Activated CD4-positive, alpha-beta memory T cell treated with anti-CD3 and anti-CD28 coated beads for 36 hours (primary cell): ENCODE measurements at regions of chr1 and their contacts with region 1.

Region 1: GRCh38 chr1:214261206-214262123 is 19.5 kb upstream of the SMYD2 start:
- DNase-seq: peak; percentile 87
- H3K4me3 Mint-ChIP-seq: no peak overlapping the region
- H3K27ac Mint-ChIP-seq: no peak overlapping the region
- H3K4me1 Mint-ChIP-seq: peaks cover 13% of the 10 kb centered on the region
- H3K27me3 Mint-ChIP-seq: peaks cover 52% of the 10 kb centered on the region

Region 2: GRCh38 chr1:213744780-213745179 is 516.7 kb before region 1 on chr1:
- CTCF ChIA-PET with region 1: no interaction called
- POLR2A ChIA-PET with region 1: no interaction called
- intact Hi-C with region 1: no loop called
- DNase-seq: no peak
- H3K4me3 Mint-ChIP-seq: no peak overlapping the region
- H3K27ac Mint-ChIP-seq: no peak overlapping the region
- H3K4me1 Mint-ChIP-seq: no peaks in the 10 kb centered on the region
- H3K27me3 Mint-ChIP-seq: no peaks in the 10 kb centered on the region

Region 3: GRCh38 chr1:214067397-214067796 is 194.1 kb before region 1 on chr1:
- CTCF ChIA-PET with region 1: no interaction called
- POLR2A ChIA-PET with region 1: no interaction called
- intact Hi-C with region 1: no loop called
- DNase-seq: no peak
- H3K4me3 Mint-ChIP-seq: no peak overlapping the region
- H3K27ac Mint-ChIP-seq: no peak overlapping the region
- H3K4me1 Mint-ChIP-seq: no peaks in the 10 kb centered on the region
- H3K27me3 Mint-ChIP-seq: no peaks in the 10 kb centered on the region

Region 4: DNA sequence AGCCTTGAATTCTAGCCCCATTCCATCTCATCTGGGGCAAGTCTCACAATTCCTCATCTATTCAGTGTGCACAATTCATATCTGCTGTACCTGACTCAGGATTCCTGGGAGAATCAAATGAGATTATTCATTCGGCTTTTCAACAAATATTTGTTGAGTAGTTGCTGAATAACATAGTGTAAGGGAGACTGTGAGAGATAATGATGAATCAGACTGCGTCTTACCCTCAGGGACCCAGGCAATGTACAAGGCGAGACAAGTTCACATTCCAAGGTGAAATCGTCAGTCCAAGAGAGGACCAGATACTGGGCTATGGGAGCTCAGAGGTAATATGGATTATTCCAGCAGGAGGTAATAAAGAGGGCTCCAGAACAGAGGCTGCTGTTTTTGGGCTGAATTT is 48.3 kb before region 1 on chr1:
- CTCF ChIA-PET with region 1: interaction called, 21 read pairs
- POLR2A ChIA-PET with region 1: no interaction called
- intact Hi-C with region 1: loop called (anchors 2 kb)
- DNase-seq: no peak
- H3K4me3 Mint-ChIP-seq: no peak overlapping the region
- H3K27ac Mint-ChIP-seq: no peak overlapping the region
- H3K4me1 Mint-ChIP-seq: peaks cover 1% of the 10 kb centered on the region
- H3K27me3 Mint-ChIP-seq: peaks cover 9% of the 10 kb centered on the region

Region 5: DNA sequence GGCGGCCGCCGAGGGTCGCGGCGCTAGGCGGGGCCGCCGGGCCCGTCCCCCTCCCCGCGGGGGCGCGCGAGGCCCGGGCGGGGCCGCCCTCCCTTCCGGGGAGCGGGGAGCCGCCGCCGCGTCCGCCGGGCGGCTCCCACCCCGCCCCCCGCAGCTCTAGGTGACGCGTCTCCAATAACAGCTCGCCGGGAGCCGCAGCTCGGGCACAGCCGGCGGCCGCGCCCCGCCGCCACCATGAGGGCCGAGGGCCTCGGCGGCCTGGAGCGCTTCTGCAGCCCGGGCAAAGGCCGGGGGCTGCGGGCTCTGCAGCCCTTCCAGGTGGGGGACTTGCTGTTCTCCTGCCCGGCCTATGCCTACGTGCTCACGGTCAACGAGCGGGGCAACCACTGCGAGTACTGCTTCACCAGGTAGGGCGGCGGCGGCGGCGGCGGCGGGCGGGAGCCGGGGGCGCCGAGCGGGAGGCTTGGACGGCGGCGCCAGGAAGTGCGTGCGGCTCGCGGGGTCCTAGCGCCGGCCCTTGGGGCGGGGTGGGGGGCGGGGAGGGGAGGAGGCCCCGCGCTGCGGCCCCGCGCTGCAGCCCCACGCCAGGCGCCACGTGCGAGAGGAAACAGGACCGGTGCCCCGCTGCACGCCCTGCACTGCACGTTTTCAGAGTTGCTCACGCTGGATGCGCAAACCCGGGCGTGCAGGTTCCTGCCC is 19.7 kb after region 1 on chr1 and contains the start of gene SMYD2:
- CTCF ChIA-PET with region 1: interaction called, 37 read pairs
- POLR2A ChIA-PET with region 1: no interaction called
- intact Hi-C with region 1: loop called (anchors 1 kb)
- DNase-seq: peak; percentile 72
- H3K4me3 Mint-ChIP-seq: peak within 1 kb of the TSS; percentile 86
- H3K27ac Mint-ChIP-seq: peak within 1 kb of the TSS; percentile 77
- H3K4me1 Mint-ChIP-seq: peaks cover 35% of the 10 kb centered on the region
- H3K27me3 Mint-ChIP-seq: no peaks in the 10 kb centered on the region
- total RNA-seq, gene SMYD2: 31.1 to 32.8 TPM

Region 6: DNA sequence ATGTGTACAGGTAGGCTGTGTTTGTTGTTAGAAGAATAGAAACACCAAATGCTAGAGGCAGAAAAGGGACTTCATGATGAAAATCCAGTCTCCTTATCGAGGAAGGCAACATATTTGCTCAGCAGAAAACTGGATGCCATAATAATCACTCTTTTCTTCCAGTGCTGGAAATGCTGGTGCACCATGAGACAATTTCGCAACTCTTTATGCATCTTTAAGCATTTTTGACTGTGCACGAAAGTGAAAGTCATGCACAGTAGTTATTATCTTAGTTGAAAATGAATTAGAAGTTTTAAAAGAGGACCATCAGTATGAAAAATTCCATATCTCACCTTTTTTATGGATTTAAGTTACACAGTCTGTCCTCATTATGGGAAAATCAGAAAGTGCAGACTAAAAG is 48.5 kb after region 1 on chr1:
- CTCF ChIA-PET with region 1: interaction called, 18 read pairs
- POLR2A ChIA-PET with region 1: no interaction called
- intact Hi-C with region 1: no loop called
- DNase-seq: peak; percentile 20
- H3K4me3 Mint-ChIP-seq: no peak overlapping the region
- H3K27ac Mint-ChIP-seq: no peak overlapping the region
- H3K4me1 Mint-ChIP-seq: peaks cover 26% of the 10 kb centered on the region
- H3K27me3 Mint-ChIP-seq: no peaks in the 10 kb centered on the region

Region 7: DNA sequence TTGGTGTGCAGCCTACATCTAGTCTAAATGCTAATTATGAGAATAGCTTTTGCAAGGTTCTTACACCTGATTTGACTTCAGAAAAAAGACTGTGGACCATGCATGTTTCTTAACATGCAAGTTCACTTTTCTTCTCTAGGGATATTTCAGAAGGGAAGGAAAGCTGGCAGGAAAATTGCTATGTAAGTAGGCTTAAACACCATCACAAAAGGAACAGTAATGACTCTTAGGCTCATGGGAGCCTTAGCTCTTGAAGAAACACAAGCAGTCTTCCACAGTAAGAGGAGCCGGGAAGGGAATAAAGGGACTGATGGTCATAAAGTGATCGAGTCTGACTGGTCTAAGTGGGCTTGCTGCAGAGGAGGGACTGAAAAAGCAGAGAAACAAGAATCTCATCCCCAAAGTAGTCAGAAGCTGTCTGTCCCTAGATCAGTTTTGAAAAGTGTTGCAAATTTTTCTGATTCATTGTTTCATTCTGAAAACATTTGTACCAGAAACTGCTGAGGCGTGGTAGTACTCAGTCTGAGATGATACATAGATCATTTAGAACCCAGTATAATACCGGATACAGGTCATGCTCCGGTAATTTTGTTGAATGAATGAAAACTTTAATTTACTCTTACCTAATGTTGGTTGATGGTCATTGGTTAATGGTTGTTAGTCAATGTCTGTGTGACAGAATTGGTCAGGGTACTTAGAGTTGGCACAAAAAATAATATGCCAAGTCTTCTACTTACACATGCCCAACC is 60.4 kb after region 1 on chr1:
- CTCF ChIA-PET with region 1: interaction called, 491 read pairs
- POLR2A ChIA-PET with region 1: no interaction called
- intact Hi-C with region 1: no loop called
- DNase-seq: no peak
- H3K4me3 Mint-ChIP-seq: no peak overlapping the region
- H3K27ac Mint-ChIP-seq: no peak overlapping the region
- H3K4me1 Mint-ChIP-seq: peaks cover 4% of the 10 kb centered on the region
- H3K27me3 Mint-ChIP-seq: no peaks in the 10 kb centered on the region

Region 8: GRCh38 chr1:214362188-214362882 is 100.9 kb after region 1 on chr1:
- CTCF ChIA-PET with region 1: no interaction called
- POLR2A ChIA-PET with region 1: no interaction called
- intact Hi-C with region 1: no loop called
- DNase-seq: no peak
- H3K4me3 Mint-ChIP-seq: no peak overlapping the region
- H3K27ac Mint-ChIP-seq: no peak overlapping the region
- H3K4me1 Mint-ChIP-seq: peaks cover 4% of the 10 kb centered on the region
- H3K27me3 Mint-ChIP-seq: peaks cover 38% of the 10 kb centered on the region

Region 9: GRCh38 chr1:214439352-214440119 is 178.1 kb after region 1 on chr1:
- CTCF ChIA-PET with region 1: no interaction called
- POLR2A ChIA-PET with region 1: no interaction called
- intact Hi-C with region 1: loop called (anchors 2 kb)
- DNase-seq: peak; percentile 81
- H3K4me3 Mint-ChIP-seq: peak overlapping the region; percentile 44
- H3K27ac Mint-ChIP-seq: peak overlapping the region; percentile 96
- H3K4me1 Mint-ChIP-seq: peaks cover 41% of the 10 kb centered on the region
- H3K27me3 Mint-ChIP-seq: peaks cover 1% of the 10 kb centered on the region